ENCODE measurements at regions of chr4 and their contacts with region 1.

Region 1: GRCh38 chr4:36208893-36209473 is 35.3 kb downstream of the ARAP2 start:
- DNase-seq: peak in 8 of 14 experiments; percentile 2 to 75 (median 37)
- ATAC-seq: peak; percentile 81
- H3K4me3 ChIP-seq: no peak overlapping the region
- H3K4me3 Mint-ChIP-seq: peak overlapping the region; percentile 54
- H3K27ac ChIP-seq: no peak overlapping the region
- H3K27ac Mint-ChIP-seq: peak overlapping the region; percentile 78
- H3K4me1 ChIP-seq: peaks cover 8% of the 10 kb centered on the region
- H3K4me1 Mint-ChIP-seq: peaks cover 67% of the 10 kb centered on the region
- H3K27me3 ChIP-seq: no peaks in the 10 kb centered on the region
- H3K27me3 Mint-ChIP-seq: no peaks in the 10 kb centered on the region
- CTCF ChIP-seq: no peak

Region 2: DNA sequence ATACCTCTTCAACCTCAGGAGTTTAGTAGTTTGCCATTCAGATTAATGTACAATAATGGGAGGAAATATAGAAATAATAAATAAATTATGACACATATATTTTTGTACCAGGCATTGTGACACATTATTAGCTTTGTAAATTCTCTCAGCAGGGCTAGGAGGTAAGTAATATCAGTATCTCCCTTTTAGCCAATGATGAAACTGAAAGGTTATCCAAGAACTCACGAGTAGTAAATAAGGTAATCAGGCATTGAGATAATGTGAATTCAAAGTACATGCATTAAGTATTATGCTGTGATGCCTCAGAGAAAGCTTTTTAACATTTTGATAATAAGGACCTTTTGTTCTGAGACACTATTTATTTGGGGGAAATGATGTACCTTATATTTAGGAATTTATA is 40.6 kb after region 1 on chr4:
- CTCF ChIA-PET with region 1: interaction called, 3 read pairs
- POLR2A ChIA-PET with region 1: interaction called, 6 read pairs
- intact Hi-C with region 1: loop called (anchors 5 kb)
- DNase-seq: no peak
- ATAC-seq: no peak
- H3K4me3 ChIP-seq: no peak overlapping the region
- H3K4me3 Mint-ChIP-seq: no peak overlapping the region
- H3K27ac ChIP-seq: no peak overlapping the region
- H3K27ac Mint-ChIP-seq: no peak overlapping the region
- H3K4me1 ChIP-seq: peaks cover 16% of the 10 kb centered on the region
- H3K4me1 Mint-ChIP-seq: peaks cover 27% of the 10 kb centered on the region
- H3K27me3 ChIP-seq: no peaks in the 10 kb centered on the region
- H3K27me3 Mint-ChIP-seq: no peaks in the 10 kb centered on the region
- CTCF ChIP-seq: no peak

Region 3: DNA sequence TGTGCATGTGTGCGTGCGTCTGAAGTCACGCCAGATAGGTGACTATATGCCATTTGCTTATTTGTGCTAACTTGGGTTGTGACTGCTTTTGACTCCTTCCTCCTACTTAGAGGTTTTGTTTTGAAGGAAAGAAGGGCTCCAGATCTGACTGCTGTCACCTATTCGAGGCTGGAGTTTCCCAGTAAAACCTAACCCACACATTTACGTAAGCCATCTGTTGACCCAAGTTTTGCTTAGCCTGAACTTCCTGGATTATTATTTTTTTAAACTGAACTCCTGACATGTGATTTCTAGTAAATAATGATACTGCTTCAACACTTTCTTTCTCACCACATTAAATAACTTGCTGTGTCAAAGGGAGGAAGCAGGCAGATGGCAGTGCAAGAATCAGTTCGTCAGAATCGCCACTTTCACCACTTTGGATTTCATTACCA is 114.0 kb after region 1 on chr4:
- CTCF ChIA-PET with region 1: no interaction called
- POLR2A ChIA-PET with region 1: no interaction called
- intact Hi-C with region 1: no loop called
- DNase-seq: peak in 9 of 14 experiments; percentile 5 to 90 (median 23)
- ATAC-seq: peak; percentile 88
- H3K4me3 ChIP-seq: peak overlapping the region; percentile 29
- H3K4me3 Mint-ChIP-seq: peak overlapping the region; percentile 26
- H3K27ac ChIP-seq: peak overlapping the region in 1 of 2 donors; percentile 57
- H3K27ac Mint-ChIP-seq: peak overlapping the region; percentile 64
- H3K4me1 ChIP-seq: peaks cover 24% of the 10 kb centered on the region
- H3K4me1 Mint-ChIP-seq: peaks cover 47% of the 10 kb centered on the region
- H3K27me3 ChIP-seq: no peaks in the 10 kb centered on the region
- H3K27me3 Mint-ChIP-seq: no peaks in the 10 kb centered on the region
- CTCF ChIP-seq: no peak